ENCODE measurements at regions of chr10 and their contacts with region 1.

Region 1: GRCh38 chr10:74262856-74263255 is 111.8 kb downstream of the ADK start:
- DNase-seq: no peak
- ATAC-seq: no peak
- H3K4me3 ChIP-seq: no peak overlapping the region
- H3K27ac ChIP-seq: no peak overlapping the region
- H3K4me1 ChIP-seq: no peaks in the 10 kb centered on the region
- H3K27me3 ChIP-seq: no peaks in the 10 kb centered on the region

Region 2: DNA sequence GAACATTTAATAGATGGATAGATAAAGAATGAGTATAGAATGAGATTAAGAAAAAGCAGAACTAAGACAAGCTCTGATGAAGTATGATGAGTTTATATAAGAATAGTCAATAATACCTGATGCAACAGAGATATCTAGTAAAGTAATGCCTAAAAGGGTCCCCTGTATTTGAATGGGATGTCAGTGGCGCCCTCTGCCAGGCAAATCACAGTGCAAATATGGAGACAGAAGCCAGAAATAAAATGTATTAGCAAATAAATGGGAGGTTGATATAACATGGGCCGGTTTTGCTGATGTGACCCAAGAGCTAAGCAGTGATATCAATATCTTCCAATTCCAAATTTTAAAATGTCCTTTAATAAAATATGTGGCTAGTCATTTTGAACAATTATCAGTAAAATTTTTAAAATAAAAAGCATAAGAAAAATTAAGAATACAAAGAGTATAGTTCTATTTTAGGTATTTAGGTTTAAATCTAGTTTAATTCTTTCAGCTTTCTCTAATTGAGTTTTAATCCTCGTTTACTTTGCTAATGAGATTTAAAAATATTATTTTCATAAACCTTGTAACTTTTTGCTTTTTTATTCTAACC is 49.2 kb before region 1 on chr10:
- intact Hi-C with region 1: no loop called
- DNase-seq: peak in 2 of 3 donors; percentile 24 to 74
- ATAC-seq: peak in 1 of 2 donors; percentile 24
- H3K4me3 ChIP-seq: no peak overlapping the region
- H3K27ac ChIP-seq: no peak overlapping the region
- H3K4me1 ChIP-seq: peaks cover 3% of the 10 kb centered on the region
- H3K27me3 ChIP-seq: no peaks in the 10 kb centered on the region

Region 3: GRCh38 chr10:75021379-75022249 is 758.8 kb after region 1 on chr10:
- intact Hi-C with region 1: loop called in 1 of 4 experiments (anchors 5 kb)
- DNase-seq: no peak
- ATAC-seq: no peak
- H3K4me3 ChIP-seq: no peak overlapping the region
- H3K27ac ChIP-seq: no peak overlapping the region
- H3K4me1 ChIP-seq: peaks cover 2% of the 10 kb centered on the region
- H3K27me3 ChIP-seq: no peaks in the 10 kb centered on the region

Region 4: GRCh38 chr10:75245491-75246250 is 982.8 kb after region 1 on chr10:
- intact Hi-C with region 1: loop called in 1 of 4 experiments (anchors 10 kb)
- DNase-seq: no peak
- ATAC-seq: peak in 1 of 2 donors; percentile 24
- H3K4me3 ChIP-seq: no peak overlapping the region
- H3K27ac ChIP-seq: no peak overlapping the region
- H3K4me1 ChIP-seq: no peaks in the 10 kb centered on the region
- H3K27me3 ChIP-seq: no peaks in the 10 kb centered on the region

Measured in right cardiac atrium (tissue), 5 donors.